ENCODE measurements at regions of chr11 and their contacts with region 1.

Region 1: DNA sequence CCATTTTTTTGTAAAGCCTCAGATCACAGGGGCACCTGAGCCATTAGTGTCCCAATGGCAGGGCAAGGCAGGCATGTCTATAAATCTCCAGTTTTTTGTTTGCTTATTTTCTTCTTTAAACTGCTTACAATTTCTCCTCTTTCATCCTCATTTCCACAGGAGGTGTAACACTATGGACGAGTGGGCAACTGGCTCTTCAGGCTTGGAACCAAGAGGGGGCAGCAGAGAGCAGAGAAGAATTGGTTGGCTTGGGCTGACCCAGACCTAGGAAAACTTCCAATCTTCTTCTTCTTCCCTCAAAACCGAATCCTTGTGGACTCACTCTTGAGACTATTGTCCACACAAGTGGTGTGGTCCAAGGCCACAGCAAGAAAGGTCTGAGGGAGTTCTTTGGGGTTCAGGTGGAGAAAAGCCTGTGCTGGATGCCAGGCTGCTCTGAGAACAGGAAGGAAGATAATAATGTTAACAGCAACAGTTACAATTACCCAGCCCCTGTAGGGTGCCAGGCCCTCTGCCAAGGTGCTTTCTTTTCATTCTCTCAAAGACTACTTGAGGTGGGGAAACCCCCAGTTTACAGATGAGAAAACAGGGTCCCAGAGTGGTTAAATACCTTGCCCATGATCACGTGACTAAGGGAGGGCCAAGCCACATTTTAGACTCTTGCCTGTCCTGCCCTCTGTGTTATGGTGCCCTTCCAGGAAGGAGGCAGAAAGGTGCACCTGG is 70.7 kb upstream of the E2F8 start:
- DNase-seq: peak in 1 of 2 donors; percentile 29
- ATAC-seq: peak; percentile 73 to 84
- H3K4me3 ChIP-seq: no peak overlapping the region
- H3K27ac ChIP-seq: no peak overlapping the region
- H3K4me1 ChIP-seq: peaks cover 0 to 3% of the 10 kb centered on the region in 2 donors
- H3K27me3 ChIP-seq: no peaks in the 10 kb centered on the region
- CTCF ChIP-seq: peak; percentile 26 to 76 (median 66)
- POLR2A ChIP-seq: no peak

Region 2: GRCh38 chr11:19460718-19461405 is 149.4 kb after region 1 on chr11:
- in situ Hi-C with region 1: no loop called
- intact Hi-C with region 1: no loop called
- DNase-seq: no peak
- ATAC-seq: no peak
- H3K4me3 ChIP-seq: no peak overlapping the region
- H3K27ac ChIP-seq: no peak overlapping the region
- H3K4me1 ChIP-seq: peaks cover 0 to 8% of the 10 kb centered on the region in 2 donors
- H3K27me3 ChIP-seq: no peaks in the 10 kb centered on the region
- CTCF ChIP-seq: no peak
- POLR2A ChIP-seq: no peak

Region 3: DNA sequence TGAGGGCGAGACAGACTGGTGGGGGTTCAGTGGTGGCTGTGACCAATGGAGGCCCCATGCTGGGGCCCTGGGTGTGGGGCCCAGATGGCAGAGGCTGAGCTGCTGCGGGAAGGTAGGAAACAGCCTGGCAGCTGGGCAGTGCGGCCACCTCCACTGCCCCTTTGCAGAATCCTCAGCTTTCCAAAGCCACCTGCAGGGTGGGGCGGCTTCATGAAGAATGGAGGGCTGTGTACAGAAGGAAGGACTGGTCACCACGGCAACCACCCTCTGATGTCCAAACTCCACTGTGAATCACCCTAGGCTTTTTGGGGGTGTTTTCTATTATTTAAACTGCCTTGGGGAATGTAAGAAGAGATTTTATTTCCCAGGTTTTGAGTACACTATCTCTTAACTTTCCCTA is 234.9 kb after region 1 on chr11:
- in situ Hi-C with region 1: loop called in 2 of 4 experiments (anchors 10 kb)
- intact Hi-C with region 1: no loop called
- DNase-seq: no peak
- ATAC-seq: no peak
- H3K4me3 ChIP-seq: no peak overlapping the region
- H3K27ac ChIP-seq: no peak overlapping the region
- H3K4me1 ChIP-seq: no peaks in the 10 kb centered on the region
- H3K27me3 ChIP-seq: no peaks in the 10 kb centered on the region
- CTCF ChIP-seq: no peak
- POLR2A ChIP-seq: no peak

Region 4: GRCh38 chr11:20278727-20279126 is 967.3 kb after region 1 on chr11:
- in situ Hi-C with region 1: no loop called
- intact Hi-C with region 1: loop called (anchors 5 kb)
- DNase-seq: no peak
- ATAC-seq: no peak
- H3K4me3 ChIP-seq: no peak overlapping the region
- H3K27ac ChIP-seq: no peak overlapping the region
- H3K4me1 ChIP-seq: no peaks in the 10 kb centered on the region
- H3K27me3 ChIP-seq: peaks cover 0 to 5% (median 0%) of the 10 kb centered on the region in 3 donors
- CTCF ChIP-seq: no peak
- POLR2A ChIP-seq: no peak